Endothelial cell of umbilical vein (primary cell): ENCODE measurements at regions of chr16 and their contacts with region 1.

Region 1: GRCh38 chr16:22190776-22191531 is 15.1 kb upstream of the EEF2K start:
- DNase-seq: peak; percentile 97
- H3K4me3 ChIP-seq: peak overlapping the region; percentile 21 to 80 (median 47)
- H3K27ac ChIP-seq: peak overlapping the region; percentile 99
- H3K4me1 ChIP-seq: peaks cover 45% of the 10 kb centered on the region
- H3K27me3 ChIP-seq: no peaks in the 10 kb centered on the region
- CTCF ChIP-seq: no peak
- POLR2A ChIP-seq: peak; percentile 28

Region 2: GRCh38 chr16:21708533-21709115 is 482.3 kb before region 1 on chr16:
- CTCF ChIA-PET with region 1: interaction called, 13 read pairs
- POLR2A ChIA-PET with region 1: no interaction called
- dilution Hi-C with region 1: no loop called
- intact Hi-C with region 1: no loop called
- DNase-seq: peak; percentile 74
- H3K4me3 ChIP-seq: no peak overlapping the region
- H3K27ac ChIP-seq: no peak overlapping the region
- H3K4me1 ChIP-seq: no peaks in the 10 kb centered on the region
- H3K27me3 ChIP-seq: no peaks in the 10 kb centered on the region
- CTCF ChIP-seq: peak; percentile 73
- POLR2A ChIP-seq: no peak

Region 3: GRCh38 chr16:21989133-21989532 is 201.8 kb before region 1 on chr16:
- CTCF ChIA-PET with region 1: interaction called, 26 read pairs
- POLR2A ChIA-PET with region 1: interaction called, 3 read pairs
- dilution Hi-C with region 1: no loop called
- intact Hi-C with region 1: no loop called
- DNase-seq: no peak
- H3K4me3 ChIP-seq: no peak overlapping the region
- H3K27ac ChIP-seq: no peak overlapping the region
- H3K4me1 ChIP-seq: no peaks in the 10 kb centered on the region
- H3K27me3 ChIP-seq: no peaks in the 10 kb centered on the region
- CTCF ChIP-seq: no peak
- POLR2A ChIP-seq: no peak

Region 4: DNA sequence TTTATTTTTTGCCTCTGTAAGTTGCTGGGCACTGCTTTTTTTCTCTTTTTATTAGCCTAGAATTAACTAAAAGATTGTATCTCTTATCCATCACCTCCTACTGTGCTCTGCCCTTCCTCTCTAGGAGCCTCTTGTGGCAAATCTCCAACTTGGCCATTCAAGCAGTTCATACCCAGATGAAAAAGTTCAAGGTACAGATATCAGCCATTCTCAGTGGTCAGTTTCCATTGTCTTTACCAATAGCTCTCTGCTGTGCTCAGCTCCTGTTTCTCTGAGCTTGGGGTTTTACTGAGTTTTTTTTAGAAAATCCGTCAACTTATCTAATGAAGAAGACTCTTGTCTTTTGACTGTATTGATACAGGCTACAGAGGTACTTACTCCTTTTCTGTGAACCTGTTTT is 167.4 kb before region 1 on chr16:
- CTCF ChIA-PET with region 1: no interaction called
- POLR2A ChIA-PET with region 1: no interaction called
- dilution Hi-C with region 1: no loop called
- intact Hi-C with region 1: loop called (anchors 1 kb)
- DNase-seq: no peak
- H3K4me3 ChIP-seq: no peak overlapping the region
- H3K27ac ChIP-seq: no peak overlapping the region
- H3K4me1 ChIP-seq: peaks cover 59% of the 10 kb centered on the region
- H3K27me3 ChIP-seq: no peaks in the 10 kb centered on the region
- CTCF ChIP-seq: no peak
- POLR2A ChIP-seq: no peak

Region 5: GRCh38 chr16:22141746-22142145 is 49.2 kb before region 1 on chr16:
- CTCF ChIA-PET with region 1: interaction called, 11 read pairs
- POLR2A ChIA-PET with region 1: no interaction called
- dilution Hi-C with region 1: no loop called
- intact Hi-C with region 1: no loop called
- DNase-seq: peak; percentile 6
- H3K4me3 ChIP-seq: no peak overlapping the region
- H3K27ac ChIP-seq: no peak overlapping the region
- H3K4me1 ChIP-seq: no peaks in the 10 kb centered on the region
- H3K27me3 ChIP-seq: peaks cover 0 to 4% of the 10 kb centered on the region in 2 experiments
- CTCF ChIP-seq: peak; percentile 35 to 49
- POLR2A ChIP-seq: no peak

Region 6: DNA sequence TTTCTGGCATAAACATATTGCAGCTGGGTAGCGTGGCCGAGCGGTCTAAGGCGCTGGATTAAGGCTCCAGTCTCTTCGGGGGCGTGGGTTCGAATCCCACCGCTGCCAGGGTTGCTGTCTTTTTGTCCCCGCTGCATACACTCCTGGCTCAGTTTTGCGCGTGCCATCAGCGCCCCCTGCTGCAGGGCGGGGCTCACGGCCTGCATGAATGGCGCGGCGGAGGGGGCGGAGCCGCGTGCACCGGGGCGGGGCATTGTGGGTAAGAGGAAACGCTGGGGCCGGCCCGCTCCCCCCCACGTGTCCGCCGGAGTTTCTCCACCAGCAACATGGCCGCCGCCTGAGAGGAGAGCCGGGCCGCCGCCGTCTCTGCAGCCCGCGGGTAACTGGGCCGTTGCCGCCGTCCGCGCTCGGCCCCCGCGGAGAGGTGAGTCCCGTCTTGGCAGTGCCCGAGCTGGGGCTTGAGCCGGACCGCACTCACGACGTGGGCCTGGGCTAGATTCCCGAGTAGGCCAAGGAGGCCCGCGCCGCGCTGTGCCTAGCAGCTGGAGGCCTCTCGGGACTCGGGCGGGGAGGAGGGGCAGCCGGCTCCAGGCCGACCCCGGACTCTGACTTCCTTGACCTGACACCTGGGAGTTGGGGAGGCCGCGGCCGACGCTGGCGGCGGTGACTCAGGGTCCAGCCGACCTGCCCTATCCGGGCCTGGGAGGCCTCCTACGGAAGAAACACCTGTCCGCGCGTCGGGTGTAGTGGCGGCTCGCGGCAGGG is 106.3 kb after region 1 on chr16 and contains the start of gene POLR3E:
- CTCF ChIA-PET with region 1: interaction called, 24 read pairs
- POLR2A ChIA-PET with region 1: interaction called, 4 read pairs
- dilution Hi-C with region 1: no loop called
- intact Hi-C with region 1: loop called (anchors 1 kb)
- DNase-seq: peak; percentile 99
- H3K4me3 ChIP-seq: peak within 1 kb of the TSS; percentile 77 to 99 (median 99)
- H3K27ac ChIP-seq: peak within 1 kb of the TSS; percentile 81
- H3K4me1 ChIP-seq: no peaks in the 10 kb centered on the region
- H3K27me3 ChIP-seq: no peaks in the 10 kb centered on the region
- CTCF ChIP-seq: peak; percentile 93
- POLR2A ChIP-seq: peak; percentile 66
- total RNA-seq, gene POLR3E: 42.8 and 48.3 TPM in 2 replicates